T-cell (primary cell): ENCODE measurements at regions of chr16 and their contacts with region 1.

Region 1: DNA sequence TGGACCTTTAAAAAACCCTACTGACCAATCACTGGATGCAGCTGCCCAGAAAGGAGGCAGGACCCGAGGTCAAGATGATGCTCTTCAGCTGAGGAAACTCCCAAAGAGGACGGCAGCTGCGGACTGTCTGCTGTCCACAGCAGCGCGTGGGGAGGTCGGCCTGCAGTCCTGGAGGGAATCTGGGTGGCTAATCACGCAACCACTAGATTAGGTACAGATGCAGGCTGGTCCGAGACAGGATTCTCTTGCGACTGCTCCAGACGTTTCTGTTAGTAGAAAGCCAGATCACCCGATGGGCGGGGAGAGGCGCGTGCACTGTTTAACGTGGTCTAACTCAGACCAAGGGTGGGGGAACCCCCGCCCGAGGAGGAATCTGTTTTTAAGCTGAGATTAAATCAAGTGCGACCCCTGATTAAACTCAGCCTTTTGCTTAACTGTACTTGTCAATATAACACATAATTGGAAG is 8.8 kb downstream of the CTRB2 start:
- DNase-seq: no peak
- ATAC-seq: no peak
- H3K4me3 ChIP-seq: no peak overlapping the region
- H3K4me3 Mint-ChIP-seq: no peak overlapping the region
- H3K27ac ChIP-seq: no peak overlapping the region
- H3K27ac Mint-ChIP-seq: no peak overlapping the region
- H3K4me1 ChIP-seq: peaks cover 2 to 17% of the 10 kb centered on the region in 2 experiments
- H3K4me1 Mint-ChIP-seq: peaks cover 18 to 20% (median 18%) of the 10 kb centered on the region in 3 donors
- H3K27me3 ChIP-seq: peaks cover 0 to 32% of the 10 kb centered on the region in 2 experiments
- H3K27me3 Mint-ChIP-seq: peaks cover 10 to 18% of the 10 kb centered on the region in 2 donors

Region 2: GRCh38 chr16:75160386-75160785 is 37.8 kb before region 1 on chr16:
- CTCF ChIA-PET with region 1: no interaction called
- POLR2A ChIA-PET with region 1: no interaction called
- DNase-seq: no peak
- ATAC-seq: no peak
- H3K4me3 ChIP-seq: no peak overlapping the region
- H3K4me3 Mint-ChIP-seq: no peak overlapping the region
- H3K27ac ChIP-seq: no peak overlapping the region
- H3K27ac Mint-ChIP-seq: no peak overlapping the region
- H3K4me1 ChIP-seq: no peaks in the 10 kb centered on the region
- H3K4me1 Mint-ChIP-seq: peaks cover 0 to 2% (median 0%) of the 10 kb centered on the region in 3 donors
- H3K27me3 ChIP-seq: no peaks in the 10 kb centered on the region
- H3K27me3 Mint-ChIP-seq: no peaks in the 10 kb centered on the region

Region 3: GRCh38 chr16:75238132-75238852 is 40.1 kb after region 1 on chr16:
- CTCF ChIA-PET with region 1: interaction called, 3 to 13 read pairs
- POLR2A ChIA-PET with region 1: no interaction called
- DNase-seq: no peak
- ATAC-seq: no peak
- H3K4me3 ChIP-seq: no peak overlapping the region
- H3K4me3 Mint-ChIP-seq: no peak overlapping the region
- H3K27ac ChIP-seq: no peak overlapping the region
- H3K27ac Mint-ChIP-seq: no peak overlapping the region
- H3K4me1 ChIP-seq: peaks cover 0 to 12% of the 10 kb centered on the region in 2 experiments
- H3K4me1 Mint-ChIP-seq: peaks cover 2 to 6% (median 2%) of the 10 kb centered on the region in 3 donors
- H3K27me3 ChIP-seq: peaks cover 0 to 9% of the 10 kb centered on the region in 2 experiments
- H3K27me3 Mint-ChIP-seq: peaks cover 0 to 3% of the 10 kb centered on the region in 2 donors

Region 4: DNA sequence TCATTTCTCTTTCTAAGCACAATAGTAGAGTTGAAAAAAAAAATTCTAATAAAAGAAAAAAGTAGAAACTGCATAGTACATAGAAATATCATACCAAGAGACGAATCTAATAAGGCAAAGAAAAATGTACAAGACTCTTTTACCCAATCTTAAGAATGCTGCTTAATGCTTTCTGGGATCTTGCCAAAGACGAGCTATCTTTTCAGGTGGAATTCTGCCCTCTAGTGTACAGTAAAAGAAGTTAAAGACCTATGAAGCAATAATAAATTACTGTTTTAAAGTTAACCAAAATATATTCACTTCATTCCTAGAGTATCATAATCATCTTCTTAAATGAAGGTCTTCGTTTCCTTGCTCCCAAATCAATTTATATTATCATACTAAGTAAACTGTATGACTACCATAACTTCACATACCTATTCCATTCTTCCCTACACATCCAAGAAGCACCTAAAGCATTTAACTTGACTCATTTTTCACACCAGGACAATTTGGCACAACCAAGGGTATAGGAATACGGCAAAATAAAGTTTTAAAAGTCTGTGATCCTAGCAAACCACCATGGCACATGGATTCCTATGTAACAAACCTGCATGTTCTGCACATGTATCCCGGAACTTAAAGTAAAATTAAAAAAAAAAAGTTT is 187.5 kb after region 1 on chr16:
- CTCF ChIA-PET with region 1: interaction called, 12 to 61 read pairs
- POLR2A ChIA-PET with region 1: no interaction called
- DNase-seq: peak in 3 of 35 experiments; percentile 5 to 81 (median 17)
- ATAC-seq: peak in 1 of 4 experiments; percentile 51
- H3K4me3 ChIP-seq: no peak overlapping the region
- H3K4me3 Mint-ChIP-seq: no peak overlapping the region
- H3K27ac ChIP-seq: no peak overlapping the region
- H3K27ac Mint-ChIP-seq: peak overlapping the region in 1 of 2 donors; percentile 64
- H3K4me1 ChIP-seq: peaks cover 11 to 19% of the 10 kb centered on the region in 2 experiments
- H3K4me1 Mint-ChIP-seq: peaks cover 21 to 32% (median 21%) of the 10 kb centered on the region in 3 donors
- H3K27me3 ChIP-seq: no peaks in the 10 kb centered on the region
- H3K27me3 Mint-ChIP-seq: no peaks in the 10 kb centered on the region

Region 5: DNA sequence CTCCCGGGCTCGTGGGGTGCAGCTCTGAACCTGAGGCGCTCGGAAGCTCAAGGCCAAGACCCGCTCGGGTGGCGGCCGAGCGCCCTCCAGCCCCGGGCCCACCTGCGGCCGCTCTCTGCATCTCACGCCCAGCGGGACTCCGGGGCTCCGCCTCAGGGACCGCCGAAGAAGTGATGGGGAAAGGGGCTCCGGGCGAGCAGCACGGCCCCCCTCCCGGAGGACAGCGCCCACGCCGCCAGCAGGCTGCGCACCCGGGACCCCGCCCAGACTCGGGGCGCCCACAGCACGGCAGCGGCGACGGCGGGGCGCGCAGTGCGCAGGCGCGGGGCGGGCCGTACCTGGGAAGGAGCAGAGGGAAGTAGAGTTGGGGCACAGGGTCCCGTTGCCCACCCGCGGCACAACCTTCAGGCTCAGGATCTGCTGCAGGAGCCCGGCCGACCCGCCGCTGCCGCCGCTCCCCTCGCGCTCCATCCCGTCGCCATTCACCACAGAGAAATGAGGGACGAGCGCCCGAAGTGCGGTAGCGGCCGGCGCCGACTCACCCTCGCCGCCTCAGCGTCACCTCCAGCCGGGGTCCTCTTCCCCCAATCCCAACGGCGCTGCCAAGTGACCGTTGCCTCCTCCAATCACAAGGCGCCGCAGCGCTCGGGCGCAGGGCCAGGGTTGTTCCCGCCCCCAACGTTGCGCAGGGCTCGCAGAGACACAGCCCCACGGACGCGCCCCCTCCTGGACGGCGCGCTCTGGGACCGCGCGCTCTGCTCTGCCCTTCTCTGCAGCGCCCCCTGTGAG is 266.2 kb after region 1 on chr16 and contains the start of gene TMEM170A:
- CTCF ChIA-PET with region 1: interaction called in 1 of 2 experiments, 11 read pairs
- POLR2A ChIA-PET with region 1: interaction called in 1 of 2 experiments, 3 read pairs
- DNase-seq: peak; percentile 93 to 100 (median 97)
- ATAC-seq: peak; percentile 89 to 92 (median 92)
- H3K4me3 ChIP-seq: peak within 1 kb of the TSS; percentile 91 to 97
- H3K4me3 Mint-ChIP-seq: peak within 1 kb of the TSS; percentile 82 to 93 (median 85)
- H3K27ac ChIP-seq: peak within 1 kb of the TSS; percentile 98
- H3K27ac Mint-ChIP-seq: peak within 1 kb of the TSS; percentile 91 to 95
- H3K4me1 ChIP-seq: peaks cover 9 to 32% of the 10 kb centered on the region in 2 experiments
- H3K4me1 Mint-ChIP-seq: peaks cover 44 to 50% (median 46%) of the 10 kb centered on the region in 3 donors
- H3K27me3 ChIP-seq: peaks cover 0 to 3% of the 10 kb centered on the region in 2 experiments
- H3K27me3 Mint-ChIP-seq: no peaks in the 10 kb centered on the region
- total RNA-seq, gene TMEM170A: 37.7 to 45.8 (median 41.9) TPM